Activated T-helper 1 cell treated with anti-CD3 and anti-CD28 coated beads, Interleukin-12 subunit alpha, Interleukin-12 subunit beta, Interleukin-2, Interleukin-4 antibody, amounts not matched to agents 30 ng/mL and 10 ng/mL and 1 ng/mL, durations not matched to agents 14 hours and 24 hours and 36 hours (primary cell): ENCODE measurements at regions of chr16 and their contacts with region 1.

Region 1: DNA sequence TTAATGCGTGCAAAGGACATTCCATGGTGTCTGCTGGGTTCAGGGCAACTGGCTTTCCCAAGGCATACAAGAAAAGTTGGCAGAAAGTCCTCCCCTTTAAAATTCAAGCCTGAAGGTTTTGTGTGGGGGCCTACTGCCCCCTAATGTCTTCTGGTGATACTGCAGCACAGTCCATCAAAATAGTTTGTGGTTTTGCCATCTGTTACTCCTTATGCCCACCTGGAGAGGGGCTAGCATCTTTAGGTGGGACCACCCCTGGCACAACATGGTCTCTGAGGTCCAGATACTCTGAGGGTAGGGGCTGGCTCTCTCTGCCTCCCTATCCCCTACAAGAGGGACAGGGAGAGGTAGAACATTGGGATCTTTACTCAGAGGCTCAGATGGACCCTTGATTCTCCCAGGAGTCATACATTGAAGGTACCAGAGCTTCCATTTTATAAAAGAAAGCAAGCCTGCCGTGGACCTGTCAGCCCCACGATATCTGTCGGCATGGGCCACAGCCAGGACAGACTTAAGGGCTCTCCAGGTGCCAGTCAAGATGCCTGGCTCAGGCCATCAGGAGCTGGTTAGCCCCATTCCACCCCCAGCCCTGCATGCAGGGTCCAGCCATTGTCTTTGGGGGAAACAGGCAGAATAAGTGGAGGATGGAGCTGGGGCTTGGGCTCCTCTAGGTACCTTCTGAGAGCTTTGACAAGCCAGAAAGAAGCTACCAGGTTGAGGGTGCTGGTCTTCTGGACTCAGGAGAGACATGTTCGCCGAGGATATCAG is 6.3 kb downstream of the ESRP2 start:
- DNase-seq: no peak
- H3K4me3 Mint-ChIP-seq: no peak overlapping the region
- H3K27ac Mint-ChIP-seq: peak overlapping the region; percentile 63
- H3K4me1 Mint-ChIP-seq: peaks cover 48% of the 10 kb centered on the region
- H3K27me3 Mint-ChIP-seq: no peaks in the 10 kb centered on the region

Region 2: GRCh38 chr16:68064791-68065365 is 164.7 kb before region 1 on chr16:
- intact Hi-C with region 1: loop called (anchors 1 kb)
- DNase-seq: peak; percentile 59
- H3K4me3 Mint-ChIP-seq: no peak overlapping the region
- H3K27ac Mint-ChIP-seq: peak overlapping the region; percentile 75
- H3K4me1 Mint-ChIP-seq: peaks cover 81% of the 10 kb centered on the region
- H3K27me3 Mint-ChIP-seq: no peaks in the 10 kb centered on the region

Region 3: DNA sequence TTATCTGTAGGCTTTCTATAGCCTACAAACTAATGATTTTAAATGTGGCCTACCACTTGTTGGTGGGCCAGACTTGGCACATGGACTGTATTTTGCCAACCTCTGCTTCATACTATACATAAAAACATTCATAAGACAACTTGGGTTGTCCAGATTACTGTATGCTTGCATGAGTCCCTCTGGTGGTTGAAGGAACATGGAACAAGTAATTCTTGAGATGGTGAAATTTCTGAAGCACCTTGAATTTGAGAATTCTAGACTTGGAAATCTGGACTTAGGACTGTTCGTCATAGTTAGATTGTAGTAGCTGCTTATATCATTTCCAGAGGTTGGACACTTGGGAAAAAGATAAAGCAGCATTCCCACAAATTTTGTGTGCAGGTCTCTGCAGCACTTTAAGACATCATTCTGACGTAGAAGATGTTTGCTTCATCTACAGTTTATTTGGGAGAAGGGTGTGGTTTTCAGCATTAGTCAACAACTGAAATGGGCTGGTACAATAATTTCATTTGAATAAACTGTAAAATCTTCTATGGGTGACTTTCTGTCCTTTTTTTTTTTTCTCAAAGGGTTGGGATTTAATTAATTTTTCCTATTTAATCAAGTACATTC is 113.3 kb before region 1 on chr16:
- intact Hi-C with region 1: no loop called
- DNase-seq: no peak
- H3K4me3 Mint-ChIP-seq: no peak overlapping the region
- H3K27ac Mint-ChIP-seq: peak overlapping the region; percentile 34
- H3K4me1 Mint-ChIP-seq: peaks cover 73% of the 10 kb centered on the region
- H3K27me3 Mint-ChIP-seq: no peaks in the 10 kb centered on the region

Region 4: DNA sequence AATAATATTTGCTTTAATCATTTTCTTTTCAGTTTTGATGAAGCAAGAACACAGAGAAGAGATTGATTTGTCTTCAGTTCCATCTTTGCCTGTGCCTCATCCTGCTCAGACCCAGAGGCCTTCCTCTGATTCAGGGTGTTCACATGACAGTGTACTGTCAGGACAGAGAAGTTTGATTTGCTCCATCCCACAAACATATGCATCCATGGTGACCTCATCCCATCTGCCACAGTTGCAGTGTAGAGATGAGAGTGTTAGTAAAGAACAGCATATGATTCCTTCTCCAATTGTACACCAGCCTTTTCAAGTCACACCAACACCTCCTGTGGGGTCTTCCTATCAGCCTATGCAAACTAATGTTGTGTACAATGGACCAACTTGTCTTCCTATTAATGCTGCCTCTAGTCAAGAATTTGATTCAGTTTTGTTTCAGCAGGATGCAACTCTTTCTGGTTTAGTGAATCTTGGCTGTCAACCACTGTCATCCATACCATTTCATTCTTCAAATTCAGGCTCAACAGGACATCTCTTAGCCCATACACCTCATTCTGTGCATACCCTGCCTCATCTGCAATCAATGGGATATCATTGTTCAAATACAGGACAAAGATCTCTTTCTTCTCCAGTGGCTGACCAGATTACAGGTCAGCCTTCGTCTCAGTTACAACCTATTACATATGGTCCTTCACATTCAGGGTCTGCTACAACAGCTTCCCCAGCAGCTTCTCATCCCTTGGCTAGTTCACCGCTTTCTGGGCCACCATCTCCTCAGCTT is 38.7 kb before region 1 on chr16:
- intact Hi-C with region 1: loop called (anchors 5 kb)
- DNase-seq: no peak
- H3K4me3 Mint-ChIP-seq: no peak overlapping the region
- H3K27ac Mint-ChIP-seq: no peak overlapping the region
- H3K4me1 Mint-ChIP-seq: no peaks in the 10 kb centered on the region
- H3K27me3 Mint-ChIP-seq: no peaks in the 10 kb centered on the region

Region 5: GRCh38 chr16:68214726-68215125 is 14.9 kb before region 1 on chr16:
- intact Hi-C with region 1: loop called (anchors 1 kb)
- DNase-seq: no peak
- H3K4me3 Mint-ChIP-seq: no peak overlapping the region
- H3K27ac Mint-ChIP-seq: no peak overlapping the region
- H3K4me1 Mint-ChIP-seq: peaks cover 25% of the 10 kb centered on the region
- H3K27me3 Mint-ChIP-seq: no peaks in the 10 kb centered on the region

Region 6: DNA sequence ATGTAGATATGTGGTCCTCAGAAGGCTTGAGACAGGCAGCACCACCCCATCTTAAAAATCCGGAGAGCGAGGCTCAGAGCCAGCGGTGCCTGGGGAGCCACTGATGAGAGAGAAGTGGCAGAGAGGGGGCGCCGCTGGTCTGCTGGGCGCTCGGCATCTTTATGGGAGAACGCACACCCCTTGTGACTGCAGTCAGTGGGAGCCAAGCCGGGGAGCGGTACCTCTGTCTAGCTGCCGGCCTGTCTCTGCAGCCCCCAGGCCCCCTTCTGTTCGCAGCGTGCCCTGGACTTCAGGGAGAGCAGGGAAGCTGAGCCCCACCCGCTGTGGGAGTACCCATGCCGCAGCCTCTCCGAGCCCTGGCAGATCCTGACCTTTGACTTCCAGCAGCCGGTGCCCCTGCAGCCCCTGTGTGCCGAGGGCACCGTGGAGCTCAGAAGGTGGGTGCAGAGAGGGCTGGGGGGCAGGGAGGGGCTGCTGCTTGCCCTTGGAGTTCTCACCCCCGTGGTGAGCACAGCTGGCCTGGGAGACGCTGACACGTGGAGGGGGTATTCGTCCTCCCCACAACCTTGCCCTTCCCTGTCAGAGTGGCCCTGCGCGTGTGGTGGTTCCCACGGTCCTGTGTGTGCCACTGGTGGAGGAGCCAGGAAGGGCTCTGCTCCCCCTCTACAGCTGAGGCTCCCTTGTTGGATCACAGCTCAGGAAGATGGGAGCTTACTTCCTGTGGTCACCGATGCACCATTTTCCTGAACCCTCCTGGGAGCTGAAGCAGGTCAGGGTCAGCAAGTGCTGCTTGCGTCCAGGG is 126.0 kb after region 1 on chr16:
- intact Hi-C with region 1: no loop called
- DNase-seq: no peak
- H3K4me3 Mint-ChIP-seq: peak overlapping the region; percentile 58
- H3K27ac Mint-ChIP-seq: no peak overlapping the region
- H3K4me1 Mint-ChIP-seq: peaks cover 40% of the 10 kb centered on the region
- H3K27me3 Mint-ChIP-seq: peaks cover 2% of the 10 kb centered on the region